ENCODE measurements at regions of chr17 and their contacts with region 1.

Region 1: GRCh38 chr17:28576758-28577465 is at the start of gene ALDOC:
- DNase-seq: peak; percentile 86
- ATAC-seq: peak; percentile 85
- H3K4me3 ChIP-seq: peak within 1 kb of the TSS in 2 of 3 experiments; percentile 29 to 63; a peak in 4 of 6 replicates
- H3K27ac ChIP-seq: peak within 1 kb of the TSS; percentile 52
- H3K4me1 ChIP-seq: peaks cover 48% of the 10 kb centered on the region
- H3K27me3 ChIP-seq: no peaks in the 10 kb centered on the region
- CTCF ChIP-seq: no peak
- EP300 ChIP-seq: no peak; a peak in 1 of 4 replicates
- POLR2A ChIP-seq: peak; percentile 44 to 94; a peak in 3 of 4 replicates
- RAD21 ChIP-seq: no peak; the same call in 1 of the 2 replicates
- total RNA-seq, gene ALDOC: 15.4 and 16.9 TPM in 2 replicates

Region 2: DNA sequence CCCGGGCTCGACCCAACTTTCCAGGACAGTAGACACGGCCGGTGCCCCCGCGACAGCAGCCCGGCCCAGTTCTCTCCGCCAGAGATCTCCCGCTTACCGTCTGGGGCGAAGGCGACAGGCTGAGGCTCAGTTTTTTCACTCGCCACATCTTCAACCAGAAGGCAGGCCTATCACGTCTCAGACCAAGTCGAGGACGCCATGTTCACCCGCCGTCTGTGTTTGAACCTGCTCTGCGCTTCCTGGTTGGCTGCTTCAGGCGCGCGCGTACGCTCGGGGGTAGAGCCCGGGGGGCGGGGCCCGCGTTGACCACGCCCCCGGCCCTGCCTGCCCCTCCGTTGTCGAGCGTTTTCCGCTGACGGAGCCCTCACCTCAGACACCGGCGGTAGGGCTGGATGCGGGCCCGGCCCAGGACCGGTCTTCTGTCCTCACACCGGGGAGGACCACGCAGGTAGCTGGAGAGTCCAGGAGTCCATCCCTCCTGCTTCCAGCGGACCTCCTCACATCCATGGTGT is 21.9 kb after region 1 on chr17 and contains the start of gene SPAG5:
- CTCF ChIA-PET with region 1: no interaction called
- POLR2A ChIA-PET with region 1: interaction called, 7 read pairs
- in situ Hi-C with region 1: no loop called
- intact Hi-C with region 1: loop called (anchors 1 kb)
- DNase-seq: peak; percentile 89
- ATAC-seq: peak; percentile 90
- H3K4me3 ChIP-seq: peak within 1 kb of the TSS; percentile 87 to 95 (median 95)
- H3K27ac ChIP-seq: peak within 1 kb of the TSS; percentile 80
- H3K4me1 ChIP-seq: peaks cover 17% of the 10 kb centered on the region
- H3K27me3 ChIP-seq: no peaks in the 10 kb centered on the region; a peak in 1 of 5 replicates
- CTCF ChIP-seq: no peak
- EP300 ChIP-seq: no peak
- POLR2A ChIP-seq: peak; percentile 78 to 83
- RAD21 ChIP-seq: no peak
- total RNA-seq, gene SPAG5: 98.0 and 105 TPM in 2 replicates

Region 3: GRCh38 chr17:28684963-28685362 is 108.1 kb after region 1 on chr17:
- CTCF ChIA-PET with region 1: no interaction called
- POLR2A ChIA-PET with region 1: no interaction called
- in situ Hi-C with region 1: no loop called
- intact Hi-C with region 1: no loop called
- DNase-seq: peak; percentile 65
- ATAC-seq: peak; percentile 68
- H3K4me3 ChIP-seq: no peak overlapping the region
- H3K27ac ChIP-seq: no peak overlapping the region
- H3K4me1 ChIP-seq: 0 out of 2 replicates have a peak, but pooled peaks cover 7% of the 10 kb centered on the region
- H3K27me3 ChIP-seq: no peaks in the 10 kb centered on the region
- CTCF ChIP-seq: peak; percentile 79
- EP300 ChIP-seq: no peak
- POLR2A ChIP-seq: no peak
- RAD21 ChIP-seq: 0 out of 2 replicates have a peak, but pooled peaks have one; percentile 38

Region 4: GRCh38 chr17:28743225-28744103 is 166.6 kb after region 1 on chr17 and contains the start of gene TRAF4:
- CTCF ChIA-PET with region 1: no interaction called
- POLR2A ChIA-PET with region 1: no interaction called
- in situ Hi-C with region 1: no loop called
- intact Hi-C with region 1: no loop called
- DNase-seq: peak; percentile 73
- ATAC-seq: peak; percentile 64
- H3K4me3 ChIP-seq: peak within 1 kb of the TSS; percentile 72 to 93 (median 74)
- H3K27ac ChIP-seq: peak within 1 kb of the TSS; percentile 95
- H3K4me1 ChIP-seq: peaks cover 49% of the 10 kb centered on the region
- H3K27me3 ChIP-seq: no peaks in the 10 kb centered on the region; a peak in 1 of 5 replicates
- CTCF ChIP-seq: no peak
- EP300 ChIP-seq: no peak
- POLR2A ChIP-seq: peak in 1 of 2 experiments; percentile 92; a peak in 3 of 4 replicates
- RAD21 ChIP-seq: peak; percentile 70
- total RNA-seq, gene TRAF4: 56.6 and 89.9 TPM in 2 replicates